Head of caudate nucleus (tissue), 42 donors: ENCODE measurements at regions of chr3 and their contacts with region 1.

Region 1: DNA sequence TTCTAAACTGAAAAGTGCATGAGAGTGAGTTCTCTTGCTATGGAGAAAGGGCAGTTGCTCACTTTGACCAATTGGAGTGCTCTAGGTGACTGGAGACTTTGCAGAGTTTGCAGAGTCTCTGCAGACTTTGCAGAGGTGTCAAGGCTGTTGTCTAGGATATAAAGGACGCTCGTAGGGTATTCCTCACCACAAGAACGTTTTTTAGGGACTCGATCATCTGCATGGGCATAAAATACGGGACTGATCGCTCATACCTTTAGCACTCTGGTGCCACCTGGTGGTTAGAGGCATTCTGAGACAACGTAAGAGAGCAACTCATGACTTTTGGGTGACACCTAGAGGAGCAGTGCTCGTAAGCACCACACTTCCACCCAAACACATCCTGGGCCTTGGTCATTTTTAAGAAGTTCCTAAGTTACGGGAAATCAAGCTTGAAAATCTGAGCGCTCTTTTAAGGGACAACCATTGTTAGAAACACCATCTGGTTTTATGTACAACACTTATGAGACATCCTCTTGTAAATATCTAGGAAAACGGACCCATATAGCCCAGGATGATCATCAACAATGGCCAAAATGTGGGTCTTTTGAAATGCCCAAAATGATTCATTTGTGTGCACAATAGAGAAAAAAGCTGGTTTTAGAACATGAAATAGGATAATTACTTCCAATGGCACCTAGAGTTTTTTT is 51.6 kb upstream of the XCR1 start:
- DNase-seq: peak; percentile 51 to 97 (median 91)

Region 2: GRCh38 chr3:45760878-45761711 is 317.8 kb before region 1 on chr3:
- intact Hi-C with region 1: loop called (anchors 5 kb)
- DNase-seq: peak in 26 of 42 donors; percentile 6 to 71 (median 46)

Region 3: DNA sequence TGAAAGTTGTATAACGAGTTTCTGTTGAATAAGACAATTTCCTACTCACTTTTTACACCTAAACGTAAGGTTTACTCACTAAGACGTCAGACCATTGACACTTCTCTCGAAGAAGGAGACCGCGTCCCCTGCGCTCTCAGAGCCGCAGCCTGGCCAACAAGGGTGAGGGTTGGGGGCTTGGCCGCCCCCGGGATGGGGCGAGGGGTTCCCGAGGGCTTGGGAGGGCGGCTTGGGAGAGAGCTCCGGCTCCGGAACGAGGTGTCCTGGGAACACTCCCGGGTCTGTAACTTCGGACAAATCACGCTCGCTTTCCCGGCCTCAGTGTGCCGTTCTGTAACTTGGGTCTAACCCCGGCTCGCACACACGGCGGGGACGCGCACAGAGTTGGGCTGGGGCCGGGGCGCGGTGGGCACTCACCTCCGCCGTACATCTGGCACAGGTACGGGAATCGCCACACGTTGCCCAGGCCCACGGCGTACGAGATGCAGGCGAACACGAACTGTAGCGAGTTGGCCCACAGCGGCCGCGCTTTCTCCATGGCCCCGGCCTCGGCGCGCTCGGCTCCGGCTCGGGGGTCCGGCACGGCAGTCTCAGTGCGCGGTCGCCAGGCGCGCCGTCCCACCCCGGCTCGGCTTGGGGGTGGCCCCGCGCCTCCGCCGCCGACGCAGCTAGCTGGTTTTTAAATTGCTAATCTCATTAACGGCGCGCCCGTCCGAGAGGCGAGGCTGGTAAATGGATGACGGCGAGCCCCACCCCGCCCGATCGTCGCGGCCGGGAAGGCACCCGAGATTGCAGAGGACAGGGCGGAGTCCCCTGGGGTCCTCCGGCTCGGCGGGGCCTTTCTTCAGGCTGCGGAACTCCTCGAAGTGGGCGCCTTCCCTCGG is 282.7 kb before region 1 on chr3 and contains the start of gene SLC6A20:
- intact Hi-C with region 1: no loop called
- DNase-seq: no peak

Region 4: GRCh38 chr3:45938864-45939263 is 140.0 kb before region 1 on chr3:
- intact Hi-C with region 1: loop called (anchors 1 kb)
- DNase-seq: peak; percentile 61 to 95 (median 90)

Region 5: GRCh38 chr3:46154311-46154710 is 75.5 kb after region 1 on chr3:
- intact Hi-C with region 1: no loop called
- DNase-seq: no peak